ENCODE measurements at regions of chr10 and their contacts with region 1.

Region 1: DNA sequence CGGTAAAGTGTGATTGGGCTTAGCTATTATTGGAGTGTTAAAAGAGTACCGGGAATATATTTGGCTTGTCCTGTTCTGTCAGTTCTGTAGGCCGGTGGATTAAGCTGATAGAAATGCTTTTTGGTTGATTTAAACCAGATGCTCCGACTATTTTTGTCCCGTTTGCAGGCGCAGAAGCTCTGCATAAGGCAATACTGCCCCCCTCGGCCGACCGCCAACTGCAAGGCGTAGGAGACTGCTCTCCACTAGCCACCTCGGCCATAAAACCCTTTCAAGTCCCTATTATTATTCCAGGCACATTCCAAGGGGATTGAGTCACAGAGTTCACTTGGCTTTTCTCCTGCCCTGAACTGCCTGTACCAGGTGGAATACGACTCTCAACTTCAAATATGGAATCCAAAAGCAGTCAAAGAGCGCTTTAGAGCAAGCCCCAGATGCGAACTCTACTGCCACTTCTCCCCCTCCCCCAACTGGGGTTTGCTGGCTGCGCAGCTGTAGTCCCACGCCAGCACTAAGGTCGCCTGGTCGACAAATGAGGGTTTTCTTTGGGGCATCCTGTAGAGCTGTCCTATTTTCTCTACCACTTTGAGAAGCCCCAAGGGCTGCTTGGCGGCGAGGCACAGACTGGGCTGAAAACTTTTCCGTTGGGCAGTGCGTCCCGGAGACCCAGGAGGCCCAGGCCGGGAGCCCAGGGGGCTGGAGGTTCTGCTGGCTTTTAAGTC is 108.3 kb downstream of the REEP3 start:
- DNase-seq: peak; percentile 95
- ATAC-seq: peak; percentile 77
- H3K4me3 Mint-ChIP-seq: peak overlapping the region; percentile 68
- H3K27ac Mint-ChIP-seq: peak overlapping the region; percentile 98
- H3K4me1 Mint-ChIP-seq: peaks cover 66% of the 10 kb centered on the region
- H3K27me3 Mint-ChIP-seq: no peaks in the 10 kb centered on the region
- CTCF ChIP-seq: peak; percentile 66

Region 2: GRCh38 chr10:63166742-63167258 is 462.7 kb before region 1 on chr10:
- CTCF ChIA-PET with region 1: interaction called, 26 read pairs
- POLR2A ChIA-PET with region 1: interaction called, 3 read pairs
- DNase-seq: no peak
- ATAC-seq: peak; percentile 70
- H3K4me3 Mint-ChIP-seq: no peak overlapping the region
- H3K27ac Mint-ChIP-seq: no peak overlapping the region
- H3K4me1 Mint-ChIP-seq: no peaks in the 10 kb centered on the region
- H3K27me3 Mint-ChIP-seq: no peaks in the 10 kb centered on the region
- CTCF ChIP-seq: peak; percentile 38

Region 3: GRCh38 chr10:63268798-63269503 is 360.6 kb before region 1 on chr10:
- CTCF ChIA-PET with region 1: interaction called, 4 read pairs
- POLR2A ChIA-PET with region 1: interaction called, 22 read pairs
- DNase-seq: peak; percentile 43
- ATAC-seq: peak; percentile 93
- H3K4me3 Mint-ChIP-seq: peak overlapping the region; percentile 98
- H3K27ac Mint-ChIP-seq: peak overlapping the region; percentile 100
- H3K4me1 Mint-ChIP-seq: peaks cover 11% of the 10 kb centered on the region
- H3K27me3 Mint-ChIP-seq: no peaks in the 10 kb centered on the region
- CTCF ChIP-seq: no peak

Region 4: DNA sequence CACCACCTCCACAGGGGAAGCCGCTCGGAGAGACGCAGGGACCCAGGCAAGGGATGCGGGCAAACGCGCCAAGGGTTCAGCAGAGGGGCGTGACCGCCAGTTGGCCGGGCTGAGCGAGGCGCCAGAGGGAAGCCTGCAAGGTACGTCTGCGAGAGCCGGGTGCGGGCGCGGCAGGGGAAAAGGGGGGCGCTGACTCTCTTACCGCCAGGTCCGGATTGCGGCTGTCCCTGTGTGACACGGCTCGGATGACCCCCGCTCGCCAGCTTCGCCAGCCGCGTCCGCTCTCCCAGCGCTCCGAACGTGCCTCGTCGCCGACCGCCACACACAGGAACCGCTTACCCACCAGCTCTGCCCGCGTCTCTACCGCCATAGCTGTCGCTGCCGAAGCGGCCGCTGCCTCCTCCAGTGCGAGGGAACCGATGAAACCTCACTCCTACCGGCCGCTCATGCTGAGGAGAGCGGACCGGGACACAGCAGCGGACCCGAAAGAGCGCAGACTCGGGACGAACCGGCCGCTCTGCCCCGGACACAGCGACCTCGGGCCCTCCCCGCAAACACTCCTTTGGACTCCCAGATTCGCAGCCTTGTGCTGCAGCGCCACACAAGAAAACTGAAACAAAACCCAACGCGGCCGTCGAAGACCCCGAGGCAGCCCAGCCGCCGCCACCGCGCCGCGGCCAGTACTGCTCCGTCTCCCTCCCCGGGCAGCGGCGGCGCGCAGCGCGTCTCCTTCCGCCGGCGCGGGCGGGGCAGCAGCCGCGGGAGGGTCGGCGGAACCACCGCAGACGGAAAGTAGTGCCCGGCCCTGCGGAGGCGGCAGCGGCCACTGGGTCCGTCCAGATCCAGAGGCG is 164.0 kb before region 1 on chr10 and contains the start of gene JMJD1C:
- CTCF ChIA-PET with region 1: interaction called, 3 read pairs
- POLR2A ChIA-PET with region 1: interaction called, 14 read pairs
- DNase-seq: peak; percentile 88
- ATAC-seq: peak; percentile 85
- H3K4me3 Mint-ChIP-seq: peak within 1 kb of the TSS; percentile 98
- H3K27ac Mint-ChIP-seq: peak within 1 kb of the TSS; percentile 98
- H3K4me1 Mint-ChIP-seq: peaks cover 34% of the 10 kb centered on the region
- H3K27me3 Mint-ChIP-seq: no peaks in the 10 kb centered on the region
- CTCF ChIP-seq: no peak; the same call in 1 of the 2 replicates
- total RNA-seq, gene JMJD1C: 158 to 180 TPM (median 161 TPM) in 3 replicates

Region 5: GRCh38 chr10:63521416-63522276 is 107.9 kb before region 1 on chr10:
- CTCF ChIA-PET with region 1: interaction called, 3 read pairs
- POLR2A ChIA-PET with region 1: interaction called, 10 read pairs
- DNase-seq: peak; percentile 75
- ATAC-seq: peak; percentile 67
- H3K4me3 Mint-ChIP-seq: peak overlapping the region; percentile 84
- H3K27ac Mint-ChIP-seq: peak overlapping the region; percentile 98
- H3K4me1 Mint-ChIP-seq: peaks cover 61% of the 10 kb centered on the region
- H3K27me3 Mint-ChIP-seq: no peaks in the 10 kb centered on the region
- CTCF ChIP-seq: no peak

Region 6: DNA sequence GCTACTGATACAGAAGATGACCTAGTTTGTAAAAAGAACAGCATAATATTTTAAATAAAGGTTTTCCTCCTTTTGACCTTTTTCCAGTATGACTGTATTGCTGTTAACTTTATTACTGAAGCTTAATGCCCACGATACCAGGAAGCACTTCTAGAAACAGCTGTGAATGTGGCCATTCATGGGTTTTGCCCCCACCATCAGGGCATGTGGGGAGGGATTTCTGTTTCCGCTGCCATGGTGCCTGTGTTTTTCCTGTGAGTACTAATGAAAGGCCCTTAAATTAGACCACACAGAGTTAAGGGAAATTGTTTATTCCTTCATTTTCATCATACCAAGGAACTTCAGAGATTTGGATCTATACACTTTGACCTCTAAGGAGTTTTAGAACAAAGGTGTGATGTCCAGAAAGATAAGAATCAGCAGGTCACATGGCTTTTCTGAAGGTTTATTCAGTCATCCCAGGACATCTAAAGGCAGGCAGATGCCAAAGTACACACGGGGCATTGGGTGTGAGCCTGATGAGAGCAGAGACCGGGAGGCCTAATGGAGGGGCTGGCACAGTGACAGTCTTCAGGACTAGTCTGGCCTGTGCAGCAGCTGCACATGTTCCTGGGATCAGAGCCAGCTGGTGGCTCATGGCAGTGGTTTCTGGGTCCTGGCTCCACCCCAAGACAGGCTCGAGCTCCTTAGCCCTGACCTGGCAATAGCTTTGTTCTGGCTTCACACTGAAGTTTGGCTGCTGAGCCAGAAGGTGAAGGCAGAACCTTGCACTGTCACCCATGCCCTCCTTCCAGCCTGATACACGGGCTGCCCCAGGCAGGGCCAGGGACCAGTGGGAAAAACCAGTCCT is 82.6 kb after region 1 on chr10:
- CTCF ChIA-PET with region 1: interaction called, 11 read pairs
- POLR2A ChIA-PET with region 1: interaction called, 8 read pairs
- DNase-seq: no peak
- ATAC-seq: no peak
- H3K4me3 Mint-ChIP-seq: no peak overlapping the region
- H3K27ac Mint-ChIP-seq: peak overlapping the region; percentile 98
- H3K4me1 Mint-ChIP-seq: peaks cover 64% of the 10 kb centered on the region
- H3K27me3 Mint-ChIP-seq: peaks cover 3% of the 10 kb centered on the region; the same call in 1 of the 2 replicates
- CTCF ChIP-seq: no peak